Aorta (tissue), 5 donors: ENCODE measurements at regions of chr11 and their contacts with region 1.

Region 1: GRCh38 chr11:130827451-130828377 is 88.6 kb downstream of the SNX19 start:
- DNase-seq: peak; percentile 81 to 87
- ATAC-seq: peak; percentile 55
- H3K4me3 ChIP-seq: no peak overlapping the region
- H3K27ac ChIP-seq: no peak overlapping the region
- H3K4me1 ChIP-seq: no peaks in the 10 kb centered on the region
- H3K27me3 ChIP-seq: no peaks in the 10 kb centered on the region

Region 2: GRCh38 chr11:130849215-130849568 is 21.5 kb after region 1 on chr11:
- intact Hi-C with region 1: loop called in 1 of 2 experiments (anchors 1 kb)
- DNase-seq: no peak
- ATAC-seq: peak; percentile 77
- H3K4me3 ChIP-seq: no peak overlapping the region
- H3K27ac ChIP-seq: no peak overlapping the region
- H3K4me1 ChIP-seq: peaks cover 0 to 9% of the 10 kb centered on the region in 2 donors
- H3K27me3 ChIP-seq: peaks cover 0 to 1% of the 10 kb centered on the region in 2 donors

Region 3: DNA sequence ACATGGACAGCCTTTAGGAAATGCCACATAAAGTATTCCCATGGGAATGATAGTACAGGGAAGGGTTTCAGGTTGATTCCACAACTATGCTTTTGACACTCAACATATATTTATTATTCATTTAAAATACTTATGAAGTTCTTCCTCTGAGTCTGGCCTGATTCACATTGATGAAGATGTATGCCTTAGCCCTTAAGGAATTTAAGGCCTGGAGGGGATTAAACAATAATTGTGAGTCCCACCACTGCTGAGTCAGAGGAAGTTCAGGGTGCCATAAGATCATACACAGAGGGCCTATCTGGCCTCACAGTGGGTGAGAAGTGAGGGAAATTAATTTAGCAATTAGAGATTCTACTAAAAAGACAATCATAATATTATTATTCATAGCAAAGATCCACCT is 249.6 kb after region 1 on chr11:
- intact Hi-C with region 1: no loop called
- DNase-seq: no peak
- ATAC-seq: no peak
- H3K4me3 ChIP-seq: no peak overlapping the region
- H3K27ac ChIP-seq: no peak overlapping the region
- H3K4me1 ChIP-seq: no peaks in the 10 kb centered on the region
- H3K27me3 ChIP-seq: no peaks in the 10 kb centered on the region